ENCODE measurements at regions of chr16 and their contacts with region 1.

Region 1: GRCh38 chr16:8644211-8645140 is 23.0 kb downstream of the METTL22 start:
- DNase-seq: no peak
- H3K4me3 ChIP-seq: no peak overlapping the region
- H3K27ac ChIP-seq: no peak overlapping the region
- H3K4me1 ChIP-seq: no peaks in the 10 kb centered on the region
- H3K27me3 ChIP-seq: no peaks in the 10 kb centered on the region
- CTCF ChIP-seq: no peak
- EP300 ChIP-seq: no peak
- POLR2A ChIP-seq: no peak
- RAD21 ChIP-seq: no peak

Region 2: DNA sequence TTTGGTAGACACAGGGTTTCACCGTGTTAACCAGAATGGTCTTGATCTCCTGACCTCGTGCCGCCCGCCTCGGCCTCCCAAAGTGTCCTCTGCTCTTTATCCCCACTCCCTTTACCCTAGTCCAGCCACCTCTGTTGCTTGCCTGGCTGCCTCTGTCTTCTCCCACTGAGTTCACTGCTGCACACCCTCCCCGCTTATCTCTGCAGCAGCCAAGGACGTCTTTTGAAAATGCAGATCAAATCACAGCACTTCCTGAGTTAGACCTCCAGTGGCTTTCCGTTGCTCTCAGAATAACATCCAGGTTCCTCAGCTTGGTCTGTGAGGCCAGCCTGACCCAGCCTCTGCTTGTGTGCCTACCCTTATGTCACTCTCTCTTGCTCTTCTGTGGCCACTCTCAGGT is 17.5 kb before region 1 on chr16:
- CTCF ChIA-PET with region 1: interaction called, 5 read pairs
- POLR2A ChIA-PET with region 1: interaction called, 10 read pairs
- DNase-seq: no peak
- H3K4me3 ChIP-seq: no peak overlapping the region
- H3K27ac ChIP-seq: no peak overlapping the region
- H3K4me1 ChIP-seq: no peaks in the 10 kb centered on the region; a peak in 1 of 7 replicates
- H3K27me3 ChIP-seq: no peaks in the 10 kb centered on the region
- CTCF ChIP-seq: no peak
- EP300 ChIP-seq: no peak
- POLR2A ChIP-seq: no peak
- RAD21 ChIP-seq: no peak

Measured in H1 (cell line).